ENCODE measurements at regions of chr21 and their contacts with region 1.

Region 1: DNA sequence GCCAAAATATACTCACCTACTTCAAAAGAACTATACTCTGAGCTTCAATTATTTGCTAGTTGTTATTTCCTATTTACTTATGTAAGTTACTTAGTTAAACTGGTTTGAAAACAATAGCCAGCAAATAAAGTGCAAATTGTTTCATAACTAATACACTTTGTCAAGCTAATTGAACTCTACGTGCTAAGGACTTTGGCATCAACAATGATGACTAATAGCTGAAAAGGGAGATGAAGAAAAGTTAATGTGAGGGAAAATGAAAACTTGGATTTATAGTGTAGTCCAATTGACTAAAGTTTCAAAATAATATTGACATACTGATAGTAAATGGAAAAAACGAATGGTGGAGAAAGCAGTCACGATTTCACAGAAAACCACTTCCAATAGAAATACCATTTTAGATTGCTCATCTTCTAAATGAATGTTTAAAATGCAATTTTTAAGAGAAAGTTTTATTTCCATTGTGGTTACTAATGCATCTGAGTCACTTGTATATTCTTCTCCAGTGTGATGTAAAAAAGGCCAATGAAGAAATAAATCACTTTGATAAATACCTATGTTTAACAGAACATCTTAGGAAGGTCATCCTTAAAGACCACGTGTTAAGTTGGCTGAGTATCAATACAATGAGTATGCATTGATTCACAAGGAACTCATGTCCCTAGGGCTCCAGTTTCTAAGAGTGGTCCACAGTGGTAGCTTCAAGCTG is 455.2 kb downstream of the LTN1 start:
- DNase-seq: peak; percentile 99
- ATAC-seq: peak; percentile 44
- H3K4me3 ChIP-seq: no peak overlapping the region
- H3K27ac ChIP-seq: peak overlapping the region; percentile 97
- H3K4me1 ChIP-seq: peaks cover 52% of the 10 kb centered on the region
- H3K27me3 ChIP-seq: no peaks in the 10 kb centered on the region
- CTCF ChIP-seq: no peak

Region 2: GRCh38 chr21:27648560-27648959 is 889.0 kb before region 1 on chr21:
- CTCF ChIA-PET with region 1: no interaction called
- POLR2A ChIA-PET with region 1: no interaction called
- intact Hi-C with region 1: loop called (anchors 5 kb)
- DNase-seq: peak; percentile 65
- ATAC-seq: peak; percentile 69
- H3K4me3 ChIP-seq: no peak overlapping the region
- H3K27ac ChIP-seq: peak overlapping the region; percentile 87
- H3K4me1 ChIP-seq: peaks cover 23% of the 10 kb centered on the region
- H3K27me3 ChIP-seq: no peaks in the 10 kb centered on the region
- CTCF ChIP-seq: no peak

Region 3: DNA sequence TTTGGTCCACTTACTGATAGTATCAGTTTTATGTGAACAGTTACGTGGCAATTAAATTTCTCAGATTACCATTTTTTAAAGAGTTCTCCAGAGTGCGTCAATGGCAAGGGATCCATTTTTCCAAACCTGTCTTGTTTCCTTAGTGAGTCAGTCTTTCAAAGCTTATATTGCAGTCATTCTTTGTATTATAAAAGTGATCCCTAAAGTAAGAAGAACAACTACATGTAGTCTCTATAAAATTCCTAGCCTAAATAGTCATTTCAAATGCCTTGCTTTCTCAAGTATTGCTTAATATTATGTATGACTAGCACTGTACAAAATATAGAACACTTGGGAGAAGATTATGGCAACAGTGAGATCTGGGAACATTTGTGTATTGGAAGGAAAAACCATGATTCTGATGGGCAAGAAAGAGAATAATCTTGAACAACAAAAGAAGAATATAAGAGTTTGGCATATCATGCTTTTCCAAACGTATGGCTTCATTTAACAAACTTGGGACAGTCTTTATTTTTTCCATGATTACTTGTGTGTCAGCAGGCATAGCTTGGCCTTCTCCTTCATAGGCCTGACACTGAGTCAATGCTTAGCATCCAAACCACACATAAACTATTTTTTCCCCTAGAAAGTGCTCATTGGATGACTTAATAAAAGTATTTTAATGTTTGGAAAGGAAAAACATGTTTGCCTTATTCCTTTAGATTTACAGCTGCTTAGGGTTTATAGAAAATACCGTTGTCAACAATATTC is 92.3 kb before region 1 on chr21:
- CTCF ChIA-PET with region 1: no interaction called
- POLR2A ChIA-PET with region 1: no interaction called
- intact Hi-C with region 1: loop called (anchors 1 kb)
- DNase-seq: peak; percentile 91
- ATAC-seq: peak; percentile 95
- H3K4me3 ChIP-seq: no peak overlapping the region
- H3K27ac ChIP-seq: peak overlapping the region; percentile 87
- H3K4me1 ChIP-seq: peaks cover 22% of the 10 kb centered on the region
- H3K27me3 ChIP-seq: no peaks in the 10 kb centered on the region
- CTCF ChIP-seq: no peak

Region 4: DNA sequence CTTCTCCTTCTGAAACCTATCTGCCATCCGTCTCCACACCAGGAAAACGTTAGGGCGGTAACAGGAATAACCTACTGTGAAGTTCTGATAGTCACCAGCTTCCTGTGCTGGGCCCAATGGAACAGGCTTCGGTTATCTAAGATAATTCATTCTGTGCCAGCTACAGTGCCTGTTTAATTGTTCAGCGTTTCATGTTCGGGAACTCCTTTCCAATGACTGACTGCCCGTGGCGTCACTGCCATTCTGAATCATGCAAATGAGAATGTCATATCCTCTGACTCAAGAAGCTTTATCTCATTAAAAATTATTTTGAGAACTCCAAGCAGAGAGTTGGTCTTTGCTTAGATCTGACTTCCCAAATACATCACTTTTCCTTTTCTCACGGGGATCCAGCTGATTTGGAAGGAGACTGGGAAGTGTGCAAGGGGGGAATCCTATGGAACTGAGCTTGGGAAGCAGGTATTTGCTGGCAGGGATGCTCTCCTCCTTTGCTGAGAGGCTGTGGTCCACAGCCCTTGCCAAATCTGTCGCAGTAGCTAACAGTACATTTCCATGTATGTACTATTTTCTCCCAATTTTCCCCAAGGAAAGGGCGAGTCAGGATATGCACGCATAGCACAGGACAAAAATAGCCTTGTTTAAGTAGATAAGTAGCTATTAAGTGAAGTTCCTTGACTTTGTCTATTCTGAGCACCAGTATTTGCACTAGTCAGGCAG is 96.5 kb after region 1 on chr21:
- CTCF ChIA-PET with region 1: no interaction called
- POLR2A ChIA-PET with region 1: no interaction called
- intact Hi-C with region 1: loop called (anchors 1 kb)
- DNase-seq: peak; percentile 91
- ATAC-seq: peak; percentile 31
- H3K4me3 ChIP-seq: peak overlapping the region; percentile 11; the same call in 1 of the 2 replicates
- H3K27ac ChIP-seq: peak overlapping the region; percentile 97
- H3K4me1 ChIP-seq: peaks cover 70% of the 10 kb centered on the region
- H3K27me3 ChIP-seq: no peaks in the 10 kb centered on the region
- CTCF ChIP-seq: no peak